Dendritic cell treated with granulocyte-macrophage colony-stimulating factor and Interleukin-4, amounts not matched to agents 40 ng/mL and 50 ng/mL, for 4 days (primary cell): ENCODE measurements at regions of chr16 and their contacts with region 1.

Region 1: GRCh38 chr16:25031441-25032307 is 16.5 kb upstream of the ARHGAP17 start:
- H3K4me3 Mint-ChIP-seq: peak overlapping the region; percentile 86
- H3K27ac Mint-ChIP-seq: peak overlapping the region; percentile 90
- H3K4me1 Mint-ChIP-seq: peaks cover 54% of the 10 kb centered on the region
- H3K27me3 Mint-ChIP-seq: peaks cover 5% of the 10 kb centered on the region

Region 2: DNA sequence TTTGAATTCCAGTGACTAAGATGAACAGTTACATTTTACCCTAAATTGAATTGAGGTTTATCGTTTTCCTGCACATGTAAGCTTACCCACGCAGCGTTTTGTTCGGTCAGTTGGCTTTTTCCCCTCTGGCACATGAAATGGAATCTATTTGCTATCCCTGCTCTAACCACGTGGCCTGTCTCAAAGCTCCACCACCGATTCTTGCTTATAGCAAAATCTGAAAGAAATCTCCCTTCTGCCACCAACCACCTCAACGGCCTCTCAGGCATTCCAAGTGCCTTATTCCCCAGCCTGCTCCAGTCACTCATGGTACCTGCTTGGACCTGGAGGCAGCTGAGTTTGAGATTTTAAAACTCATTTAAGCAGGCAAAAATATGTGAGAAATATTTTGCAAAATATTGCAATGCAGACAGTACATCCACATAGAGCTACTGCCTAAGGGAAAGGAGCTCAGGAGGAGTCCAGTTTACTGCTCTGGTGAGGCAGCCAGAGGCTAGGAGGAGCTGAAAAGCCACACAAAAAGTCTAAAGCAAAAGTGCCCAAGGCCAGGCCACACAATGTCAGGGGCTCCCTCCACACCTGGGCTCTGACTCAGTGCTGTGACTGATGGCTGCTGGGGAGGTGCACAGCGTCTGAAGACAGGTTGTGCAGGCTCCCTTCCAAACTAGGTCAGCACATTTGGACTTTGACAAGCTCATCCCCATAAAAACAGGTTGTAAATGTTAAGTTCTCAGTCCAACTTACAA is 42.9 kb before region 1 on chr16:
- intact Hi-C with region 1: no loop called
- H3K4me3 Mint-ChIP-seq: no peak overlapping the region
- H3K27ac Mint-ChIP-seq: peak overlapping the region; percentile 8
- H3K4me1 Mint-ChIP-seq: peaks cover 81% of the 10 kb centered on the region
- H3K27me3 Mint-ChIP-seq: no peaks in the 10 kb centered on the region

Region 3: GRCh38 chr16:24999856-25000461 is 31.7 kb before region 1 on chr16:
- intact Hi-C with region 1: no loop called
- H3K4me3 Mint-ChIP-seq: no peak overlapping the region
- H3K27ac Mint-ChIP-seq: no peak overlapping the region
- H3K4me1 Mint-ChIP-seq: peaks cover 66% of the 10 kb centered on the region
- H3K27me3 Mint-ChIP-seq: no peaks in the 10 kb centered on the region

Region 4: GRCh38 chr16:25014500-25015147 is 17.1 kb before region 1 on chr16:
- intact Hi-C with region 1: loop called (anchors 1 kb)
- H3K4me3 Mint-ChIP-seq: peak overlapping the region; percentile 97
- H3K27ac Mint-ChIP-seq: peak overlapping the region; percentile 93
- H3K4me1 Mint-ChIP-seq: peaks cover 81% of the 10 kb centered on the region
- H3K27me3 Mint-ChIP-seq: peaks cover 15% of the 10 kb centered on the region